GM12878 (cell line): ENCODE measurements at regions of chr17 and their contacts with region 1.

Region 1: DNA sequence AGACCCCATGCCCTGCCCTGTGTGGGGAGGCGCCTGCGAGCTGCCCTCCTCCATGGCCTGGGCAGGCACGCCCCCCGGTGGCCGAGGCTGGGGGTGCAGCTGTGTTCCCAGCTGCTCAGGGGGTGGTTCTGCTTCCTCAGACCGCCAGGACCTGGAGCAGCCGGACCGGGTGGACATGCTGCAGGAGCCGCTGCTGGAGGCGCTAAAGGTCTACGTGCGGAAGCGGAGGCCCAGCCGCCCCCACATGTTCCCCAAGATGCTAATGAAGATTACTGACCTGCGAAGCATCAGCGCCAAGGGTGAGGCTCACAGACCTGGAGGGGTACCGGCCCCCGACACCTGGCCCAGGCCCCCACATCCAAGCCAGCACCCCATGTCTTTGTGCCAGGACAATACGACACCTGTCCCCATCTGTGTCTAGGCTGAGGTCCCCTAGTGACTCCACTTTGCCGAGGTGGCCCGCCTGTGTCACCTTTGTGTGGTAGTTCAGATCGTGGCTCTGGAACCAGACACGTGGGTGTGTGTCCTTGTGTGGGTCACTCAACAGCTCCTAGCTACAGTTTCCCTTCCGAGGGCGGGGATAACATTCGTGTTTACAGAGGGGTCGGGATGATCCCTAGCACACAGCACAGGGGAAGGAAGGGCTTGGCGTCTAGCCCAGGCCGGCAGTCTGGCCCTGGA is 9.3 kb downstream of the GJD3 start:
- DNase-seq: no peak
- ATAC-seq: peak; percentile 89
- H3K4me3 ChIP-seq: no peak overlapping the region
- H3K27ac ChIP-seq: no peak overlapping the region
- H3K4me1 ChIP-seq: peaks cover 15% of the 10 kb centered on the region
- H3K27me3 ChIP-seq: peaks cover 0 to 2% of the 10 kb centered on the region in 2 experiments; a peak in 1 of 4 replicates
- CTCF ChIP-seq: peak; percentile 84 to 96 (median 96)
- EP300 ChIP-seq: no peak
- POLR2A ChIP-seq: peak; percentile 42
- RAD21 ChIP-seq: peak; percentile 96

Region 2: DNA sequence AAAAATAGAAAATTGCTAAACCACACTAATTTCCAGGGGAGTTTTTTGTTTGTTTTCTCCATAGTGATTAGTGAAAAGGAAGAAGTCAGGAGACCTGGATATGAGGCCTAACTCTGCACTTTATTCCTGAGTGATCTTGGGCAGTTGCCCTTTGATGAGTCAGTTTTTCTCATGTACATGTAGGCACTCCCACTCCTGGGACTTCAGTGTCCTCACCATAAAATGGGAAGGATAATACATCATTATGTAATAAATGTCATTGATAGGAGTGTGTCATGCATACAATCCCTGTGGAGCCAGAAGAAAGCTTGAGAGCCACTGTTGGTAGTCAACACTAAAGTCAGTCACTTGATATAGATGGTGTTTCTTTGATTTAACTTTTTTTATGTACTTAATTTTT is 103.7 kb before region 1 on chr17:
- CTCF ChIA-PET with region 1: no interaction called
- POLR2A ChIA-PET with region 1: no interaction called
- RAD21 ChIA-PET with region 1: no interaction called
- SMC1A ChIA-PET with region 1: no interaction called
- in situ Hi-C with region 1: no loop called
- intact Hi-C with region 1: no loop called
- DNase-seq: no peak
- ATAC-seq: no peak
- H3K4me3 ChIP-seq: no peak overlapping the region
- H3K27ac ChIP-seq: no peak overlapping the region
- H3K4me1 ChIP-seq: no peaks in the 10 kb centered on the region
- H3K27me3 ChIP-seq: no peaks in the 10 kb centered on the region
- CTCF ChIP-seq: no peak
- EP300 ChIP-seq: no peak
- POLR2A ChIP-seq: no peak
- RAD21 ChIP-seq: no peak

Region 3: GRCh38 chr17:40309031-40309948 is 46.0 kb before region 1 on chr17 and contains the start of gene RARA:
- CTCF ChIA-PET with region 1: interaction called, 311 read pairs
- POLR2A ChIA-PET with region 1: interaction called, 9 read pairs
- RAD21 ChIA-PET with region 1: interaction called, 271 read pairs
- SMC1A ChIA-PET with region 1: interaction called, 142 read pairs
- in situ Hi-C with region 1: loop called (anchors 5 kb)
- intact Hi-C with region 1: no loop called
- DNase-seq: no peak
- ATAC-seq: peak; percentile 68
- H3K4me3 ChIP-seq: peak within 1 kb of the TSS; percentile 70
- H3K27ac ChIP-seq: peak within 1 kb of the TSS; percentile 9; the same call in 1 of the 2 replicates
- H3K4me1 ChIP-seq: peaks cover 58% of the 10 kb centered on the region
- H3K27me3 ChIP-seq: no peaks in the 10 kb centered on the region
- CTCF ChIP-seq: no peak
- EP300 ChIP-seq: no peak
- POLR2A ChIP-seq: no peak
- RAD21 ChIP-seq: no peak
- polyA plus RNA-seq, gene RARA: 0.13 to 0.16 TPM

Region 4: GRCh38 chr17:40317880-40318829 is 37.1 kb before region 1 on chr17:
- CTCF ChIA-PET with region 1: interaction called, 23 read pairs
- POLR2A ChIA-PET with region 1: no interaction called
- RAD21 ChIA-PET with region 1: interaction called, 271 read pairs
- SMC1A ChIA-PET with region 1: interaction called, 5 read pairs
- in situ Hi-C with region 1: no loop called
- intact Hi-C with region 1: loop called (anchors 5 kb)
- DNase-seq: peak; percentile 79
- ATAC-seq: peak; percentile 83
- H3K4me3 ChIP-seq: peak overlapping the region; percentile 91
- H3K27ac ChIP-seq: peak overlapping the region; percentile 96
- H3K4me1 ChIP-seq: peaks cover 44% of the 10 kb centered on the region
- H3K27me3 ChIP-seq: no peaks in the 10 kb centered on the region
- CTCF ChIP-seq: no peak
- EP300 ChIP-seq: no peak; a peak in 1 of 4 replicates
- POLR2A ChIP-seq: peak; percentile 79
- RAD21 ChIP-seq: no peak

Region 5: DNA sequence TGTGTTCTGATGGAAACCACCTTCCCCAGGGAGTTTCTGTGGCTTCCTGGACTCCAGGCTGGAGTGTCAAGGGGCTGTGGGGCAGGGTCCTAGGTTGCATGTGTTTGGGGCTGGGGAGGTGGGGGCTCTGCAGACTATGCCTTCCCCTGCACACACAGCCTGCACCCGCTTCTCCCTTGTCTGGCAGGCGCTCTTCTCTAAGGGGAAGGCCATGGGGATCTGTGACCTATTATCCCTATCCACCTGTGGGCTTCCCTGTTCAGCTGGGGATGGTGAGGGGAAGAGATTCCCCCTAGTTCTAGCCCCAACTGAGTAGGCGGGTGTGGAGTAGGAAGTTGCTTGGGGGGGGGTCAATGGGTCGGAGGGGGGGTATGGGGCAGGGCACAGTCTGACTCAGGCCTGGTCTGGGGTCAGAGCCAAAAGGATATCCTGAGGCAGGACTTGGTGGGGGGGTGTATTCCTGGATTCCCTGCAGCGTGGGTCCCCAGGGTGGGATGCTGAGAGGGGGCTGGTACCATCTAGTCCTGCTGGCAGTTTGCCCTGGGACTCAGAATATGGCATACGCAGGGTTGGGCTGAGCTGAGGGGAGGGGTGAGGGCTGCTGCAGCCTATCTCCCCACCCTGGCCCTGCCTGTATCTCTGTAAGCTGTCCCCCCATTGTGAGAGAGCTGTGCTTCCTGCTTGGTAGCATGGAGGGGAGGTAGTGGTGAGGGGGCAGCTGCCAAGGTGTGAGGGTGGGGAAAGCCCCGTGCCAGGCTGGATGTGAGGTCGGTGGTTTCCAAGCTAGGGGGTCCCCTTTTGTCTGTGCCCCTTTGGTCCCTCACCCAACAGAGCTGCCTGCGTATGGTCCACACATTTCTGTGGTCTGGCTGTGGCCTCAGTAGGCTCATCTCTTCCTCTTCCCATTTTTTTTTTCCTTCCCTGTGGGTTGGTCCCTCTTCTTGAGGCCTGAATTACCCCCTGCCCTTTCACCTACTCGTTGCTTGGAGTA is 31.6 kb before region 1 on chr17:
- CTCF ChIA-PET with region 1: interaction called, 15 read pairs
- POLR2A ChIA-PET with region 1: interaction called, 3 read pairs
- RAD21 ChIA-PET with region 1: interaction called, 36 read pairs
- SMC1A ChIA-PET with region 1: interaction called, 12 read pairs
- in situ Hi-C with region 1: no loop called
- intact Hi-C with region 1: loop called (anchors 5 kb)
- DNase-seq: no peak
- ATAC-seq: peak; percentile 43
- H3K4me3 ChIP-seq: peak overlapping the region; percentile 91
- H3K27ac ChIP-seq: peak overlapping the region; percentile 96
- H3K4me1 ChIP-seq: peaks cover 68% of the 10 kb centered on the region
- H3K27me3 ChIP-seq: no peaks in the 10 kb centered on the region
- CTCF ChIP-seq: no peak
- EP300 ChIP-seq: no peak
- POLR2A ChIP-seq: peak; percentile 62
- RAD21 ChIP-seq: no peak

Region 6: GRCh38 chr17:40340880-40341807 is 14.1 kb before region 1 on chr17:
- CTCF ChIA-PET with region 1: interaction called, 16 read pairs
- POLR2A ChIA-PET with region 1: no interaction called
- RAD21 ChIA-PET with region 1: interaction called, 5 read pairs
- SMC1A ChIA-PET with region 1: interaction called, 4 read pairs
- in situ Hi-C with region 1: no loop called
- intact Hi-C with region 1: no loop called
- DNase-seq: no peak
- ATAC-seq: peak; percentile 95
- H3K4me3 ChIP-seq: peak overlapping the region; percentile 70
- H3K27ac ChIP-seq: no peak overlapping the region
- H3K4me1 ChIP-seq: peaks cover 54% of the 10 kb centered on the region
- H3K27me3 ChIP-seq: no peaks in the 10 kb centered on the region
- CTCF ChIP-seq: peak in 2 of 3 experiments; percentile 17 to 35; a peak in 4 of 6 replicates
- EP300 ChIP-seq: no peak
- POLR2A ChIP-seq: no peak
- RAD21 ChIP-seq: no peak